HCT116 (cell line): ENCODE measurements at regions of chr18 and their contacts with region 1.

Region 1: GRCh38 chr18:26536032-26536431 is 12.3 kb downstream of the KCTD1 start:
- DNase-seq: no peak
- ATAC-seq: peak; percentile 52
- H3K4me3 ChIP-seq: 0 out of 4 replicates have a peak overlapping the region, but pooled peaks of 1 of the 2 experiments have one; percentile 7
- H3K27ac ChIP-seq: peak overlapping the region; percentile 27; the same call in 1 of the 2 replicates
- H3K4me1 ChIP-seq: peaks cover 29 to 64% of the 10 kb centered on the region in 2 experiments
- H3K27me3 ChIP-seq: no peaks in the 10 kb centered on the region
- CTCF ChIP-seq: no peak
- POLR2A ChIP-seq: no peak
- RAD21 ChIP-seq: no peak

Region 2: DNA sequence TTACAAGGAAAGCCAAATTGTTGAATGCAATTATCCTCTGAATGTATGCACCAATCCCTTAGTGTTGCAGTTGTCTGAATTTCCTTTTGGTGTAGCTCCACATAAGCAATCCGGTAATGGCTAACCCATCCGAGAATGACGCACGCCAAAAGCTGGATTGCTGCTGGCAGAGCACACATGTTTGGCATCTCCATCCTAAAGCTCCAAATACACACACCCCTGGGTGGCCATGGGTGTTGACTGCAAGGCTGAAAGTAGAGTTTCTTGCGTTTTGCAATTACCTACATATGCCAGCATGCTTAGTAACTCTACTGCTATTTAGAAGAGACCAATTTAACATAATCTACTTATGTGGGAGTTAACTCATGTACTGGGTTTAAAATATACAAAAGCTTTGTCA is 40.7 kb before region 1 on chr18:
- CTCF ChIA-PET with region 1: no interaction called
- POLR2A ChIA-PET with region 1: no interaction called
- RAD21 ChIA-PET with region 1: no interaction called
- intact Hi-C with region 1: loop called (anchors 5 kb)
- DNase-seq: no peak
- ATAC-seq: no peak
- H3K4me3 ChIP-seq: no peak overlapping the region
- H3K27ac ChIP-seq: no peak overlapping the region
- H3K4me1 ChIP-seq: peaks cover 10 to 15% of the 10 kb centered on the region in 2 experiments
- H3K27me3 ChIP-seq: no peaks in the 10 kb centered on the region
- CTCF ChIP-seq: no peak
- POLR2A ChIP-seq: no peak
- RAD21 ChIP-seq: no peak